ENCODE measurements at regions of chr1 and their contacts with region 1.

Region 1: GRCh38 chr1:1122078-1122811 is 6.4 kb upstream of the C1orf159 start:
- DNase-seq: peak; percentile 47 to 88 (median 76)
- ATAC-seq: peak; percentile 91 to 97 (median 95)
- H3K4me3 ChIP-seq: peak overlapping the region in 1 of 2 donors; percentile 41
- H3K4me3 Mint-ChIP-seq: peak overlapping the region in 1 of 3 donors; percentile 45
- H3K27ac ChIP-seq: no peak overlapping the region
- H3K27ac Mint-ChIP-seq: no peak overlapping the region
- H3K4me1 ChIP-seq: peaks cover 0 to 17% of the 10 kb centered on the region in 2 experiments
- H3K4me1 Mint-ChIP-seq: peaks cover 0 to 8% (median 1%) of the 10 kb centered on the region in 3 donors
- H3K27me3 ChIP-seq: peaks cover 0 to 55% of the 10 kb centered on the region in 2 experiments
- H3K27me3 Mint-ChIP-seq: peaks cover 0 to 8% of the 10 kb centered on the region in 2 donors

Region 2: GRCh38 chr1:1098681-1099421 is 23.4 kb before region 1 on chr1:
- CTCF ChIA-PET with region 1: no interaction called
- POLR2A ChIA-PET with region 1: no interaction called
- DNase-seq: peak in 1 of 35 experiments; percentile 38
- ATAC-seq: peak in 2 of 4 experiments; percentile 64 to 80
- H3K4me3 ChIP-seq: no peak overlapping the region
- H3K4me3 Mint-ChIP-seq: peak overlapping the region; percentile 8 to 21 (median 10)
- H3K27ac ChIP-seq: peak overlapping the region; percentile 28
- H3K27ac Mint-ChIP-seq: peak overlapping the region; percentile 82 to 91
- H3K4me1 ChIP-seq: peaks cover 5 to 16% of the 10 kb centered on the region in 2 experiments
- H3K4me1 Mint-ChIP-seq: peaks cover 39 to 48% (median 39%) of the 10 kb centered on the region in 3 donors
- H3K27me3 ChIP-seq: no peaks in the 10 kb centered on the region
- H3K27me3 Mint-ChIP-seq: no peaks in the 10 kb centered on the region

Region 3: DNA sequence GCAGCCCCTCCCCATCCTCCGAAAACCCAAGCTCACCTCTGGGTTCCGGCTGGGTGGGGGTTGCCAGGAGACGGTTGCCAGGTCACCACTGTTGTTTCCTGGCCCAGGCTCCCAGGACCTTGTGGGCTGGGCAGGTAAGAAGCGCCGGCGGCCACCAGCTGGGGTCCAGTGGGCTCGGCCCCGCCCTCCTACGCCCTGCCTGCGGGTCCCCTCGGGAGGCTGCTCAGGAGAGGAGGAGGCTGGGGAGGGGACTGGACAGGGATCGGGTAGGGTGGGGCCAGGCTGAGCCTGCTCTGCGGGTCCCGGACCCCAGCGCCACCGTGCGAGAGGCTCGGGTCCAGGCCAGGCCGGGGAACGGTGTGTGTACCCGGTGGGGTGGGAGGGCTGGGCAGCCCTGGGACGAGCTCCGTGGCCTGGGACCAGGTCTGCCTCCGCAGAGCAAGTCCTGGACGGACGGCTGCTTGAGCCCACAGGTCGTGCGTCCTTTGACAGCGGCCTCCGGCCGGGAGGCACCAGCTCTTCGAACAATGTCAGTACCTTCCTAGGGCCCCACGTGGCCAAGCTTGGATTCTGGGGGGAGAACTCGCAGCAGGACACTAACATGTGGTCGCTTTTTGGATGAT is 51.7 kb after region 1 on chr1 and contains the start of gene TTLL10:
- CTCF ChIA-PET with region 1: no interaction called
- POLR2A ChIA-PET with region 1: no interaction called
- DNase-seq: peak in 31 of 35 experiments; percentile 13 to 74 (median 52)
- ATAC-seq: peak; percentile 53 to 88 (median 82)
- H3K4me3 ChIP-seq: peak within 1 kb of the TSS in 1 of 2 donors; percentile 32
- H3K4me3 Mint-ChIP-seq: peak within 1 kb of the TSS in 1 of 3 donors; percentile 24
- H3K27ac ChIP-seq: no peak within 1 kb of the TSS
- H3K27ac Mint-ChIP-seq: no peak within 1 kb of the TSS
- H3K4me1 ChIP-seq: peaks cover 31 to 59% of the 10 kb centered on the region in 2 experiments
- H3K4me1 Mint-ChIP-seq: peaks cover 17 to 33% (median 19%) of the 10 kb centered on the region in 3 donors
- H3K27me3 ChIP-seq: peaks cover 0 to 67% of the 10 kb centered on the region in 2 experiments
- H3K27me3 Mint-ChIP-seq: peaks cover 5 to 10% of the 10 kb centered on the region in 2 donors
- total RNA-seq, gene TTLL10: 0.26 to 1.0 (median 0.47) TPM in 4 of 5 donors, not detected in the other

Region 4: GRCh38 chr1:1291548-1292441 is 169.6 kb after region 1 on chr1:
- CTCF ChIA-PET with region 1: interaction called, 3 to 17 read pairs
- POLR2A ChIA-PET with region 1: no interaction called
- DNase-seq: peak; percentile 37 to 82 (median 62)
- ATAC-seq: peak; percentile 74 to 85 (median 76)
- H3K4me3 ChIP-seq: no peak overlapping the region
- H3K4me3 Mint-ChIP-seq: no peak overlapping the region
- H3K27ac ChIP-seq: no peak overlapping the region
- H3K27ac Mint-ChIP-seq: no peak overlapping the region
- H3K4me1 ChIP-seq: peaks cover 0 to 14% of the 10 kb centered on the region in 2 experiments
- H3K4me1 Mint-ChIP-seq: peaks cover 3 to 5% (median 4%) of the 10 kb centered on the region in 3 donors
- H3K27me3 ChIP-seq: peaks cover 0 to 16% of the 10 kb centered on the region in 2 experiments
- H3K27me3 Mint-ChIP-seq: peaks cover 0 to 3% of the 10 kb centered on the region in 2 donors

Measured in T-cell (primary cell).